AG04450 (cell line): ENCODE measurements at regions of chr17 and their contacts with region 1.

Region 1: DNA sequence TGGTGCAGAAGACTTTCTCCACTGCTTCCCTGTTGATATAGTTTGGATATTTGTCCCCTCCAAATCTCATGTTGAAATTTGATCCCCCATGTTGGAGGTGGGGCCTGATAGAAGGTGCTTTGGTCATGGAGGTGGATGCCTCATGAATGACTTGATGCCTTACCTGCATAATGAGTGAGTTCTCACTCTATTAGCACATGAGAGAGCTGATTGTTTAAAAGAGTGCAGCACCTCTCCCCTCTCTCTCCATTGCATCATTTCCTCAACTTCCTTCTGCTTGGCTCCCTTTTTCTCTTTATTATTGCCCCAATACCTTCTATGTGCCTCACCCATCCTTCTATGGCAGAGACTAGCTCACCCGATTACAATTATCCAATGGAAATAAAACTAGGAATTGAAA is 90.8 kb upstream of the COX10 start:
- DNase-seq: no peak
- H3K4me3 ChIP-seq: no peak overlapping the region
- H3K27ac ChIP-seq: no peak overlapping the region
- H3K27me3 ChIP-seq: no peaks in the 10 kb centered on the region
- CTCF ChIP-seq: no peak

Region 2: DNA sequence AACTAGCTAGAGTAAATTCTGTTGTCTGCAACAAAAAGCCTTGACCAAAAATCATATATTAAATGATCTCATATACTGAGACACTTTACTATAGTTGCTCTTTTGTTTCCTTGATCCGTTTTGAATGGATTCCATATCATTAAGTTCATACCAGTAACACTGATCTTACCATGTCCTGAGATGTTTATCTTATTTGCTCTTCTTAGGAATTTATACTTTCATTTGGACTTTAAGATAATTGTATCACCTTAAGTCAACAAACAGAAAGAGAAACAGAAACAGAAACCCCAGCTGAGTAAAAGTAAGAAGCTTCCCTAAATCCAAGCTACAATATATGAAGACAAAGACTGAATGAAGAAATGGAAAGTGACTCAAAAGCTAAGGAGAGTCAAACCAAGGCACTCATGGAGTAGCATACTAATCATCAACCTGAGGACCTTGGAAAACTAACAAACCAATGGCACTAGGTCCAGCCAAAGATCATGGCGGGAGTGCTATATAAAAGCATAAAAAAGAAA is 15.7 kb before region 1 on chr17:
- CTCF ChIA-PET with region 1: no interaction called
- POLR2A ChIA-PET with region 1: no interaction called
- DNase-seq: no peak
- H3K4me3 ChIP-seq: no peak overlapping the region
- H3K27ac ChIP-seq: no peak overlapping the region
- H3K27me3 ChIP-seq: no peaks in the 10 kb centered on the region
- CTCF ChIP-seq: no peak

Region 3: GRCh38 chr17:15185625-15185991 is 1207.1 kb after region 1 on chr17:
- CTCF ChIA-PET with region 1: interaction called, 13 read pairs
- POLR2A ChIA-PET with region 1: no interaction called
- DNase-seq: no peak
- H3K4me3 ChIP-seq: no peak overlapping the region
- H3K27ac ChIP-seq: no peak overlapping the region
- H3K27me3 ChIP-seq: peaks cover 16% of the 10 kb centered on the region
- CTCF ChIP-seq: no peak